Cardiac septum (tissue), 1 donor: ENCODE measurements at regions of chr5 and their contacts with region 1.

Region 1: DNA sequence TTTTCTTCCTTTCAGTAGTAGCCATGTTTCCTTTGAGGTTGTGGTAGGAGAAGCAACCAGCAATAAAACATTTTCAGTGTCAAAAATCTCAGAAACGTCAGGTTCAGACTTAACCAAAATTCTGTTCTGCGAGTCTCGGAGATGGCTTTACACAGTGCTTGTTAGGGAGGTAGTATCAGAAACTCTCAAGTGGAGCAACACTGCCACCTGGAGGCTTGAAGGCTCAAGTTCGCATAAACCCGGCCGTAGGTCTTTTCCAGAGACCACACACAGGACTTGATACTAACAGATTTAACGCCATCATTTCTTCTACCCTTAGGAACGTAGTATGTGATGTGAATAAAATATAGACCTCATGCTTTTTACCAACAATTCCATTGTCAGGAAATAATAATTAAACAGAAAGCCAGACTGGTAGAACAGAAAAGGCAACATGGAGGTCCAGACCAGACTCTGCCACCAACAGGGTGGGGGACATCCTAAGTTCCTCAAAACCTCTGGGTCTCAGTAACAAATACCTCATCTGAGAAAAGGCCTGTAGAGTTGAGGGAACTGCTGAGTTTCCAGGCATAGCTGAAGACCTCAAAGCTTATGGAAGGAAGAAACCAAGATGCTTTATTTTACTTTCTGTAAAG is 8.5 kb downstream of the PTGER4 start:
- DNase-seq: peak; percentile 89

Region 2: GRCh38 chr5:39580702-39581453 is 1107.4 kb before region 1 on chr5:
- intact Hi-C with region 1: loop called (anchors 5 kb)
- DNase-seq: no peak

Region 3: GRCh38 chr5:39714036-39714698 is 974.1 kb before region 1 on chr5:
- intact Hi-C with region 1: loop called (anchors 5 kb)
- DNase-seq: no peak

Region 4: DNA sequence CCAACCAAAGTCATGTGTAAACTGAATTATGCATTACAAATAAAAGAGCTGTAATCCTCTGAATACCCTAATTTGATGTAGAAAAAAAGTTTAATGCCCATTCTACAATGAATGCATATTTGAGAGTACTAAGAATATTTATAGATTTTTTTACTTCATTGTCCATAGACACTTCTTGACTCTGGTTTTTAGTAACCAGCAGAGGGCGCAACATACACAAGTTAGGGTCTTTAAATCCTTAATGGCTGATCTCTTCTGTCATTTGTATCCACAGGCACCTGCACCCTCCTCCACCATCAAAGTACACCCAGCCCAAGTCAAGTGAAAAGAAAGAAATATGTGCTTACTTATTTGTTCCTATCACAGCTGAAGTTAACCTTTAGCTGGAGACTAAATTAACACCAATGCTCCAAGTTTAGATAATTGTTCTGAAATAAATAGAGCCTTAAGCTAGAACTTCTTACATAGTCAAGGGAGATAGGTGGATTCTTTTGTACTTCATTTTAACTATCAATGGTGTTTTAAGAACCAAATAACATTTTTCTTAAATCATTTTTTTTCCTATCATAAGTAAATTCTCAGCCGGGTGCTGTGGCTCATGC is 739.3 kb before region 1 on chr5:
- intact Hi-C with region 1: loop called (anchors 1 kb)
- DNase-seq: no peak

Region 5: GRCh38 chr5:40333459-40334244 is 354.6 kb before region 1 on chr5:
- intact Hi-C with region 1: loop called (anchors 10 kb)
- DNase-seq: no peak

Region 6: GRCh38 chr5:40404613-40405012 is 283.6 kb before region 1 on chr5:
- intact Hi-C with region 1: loop called (anchors 5 kb)
- DNase-seq: no peak